Gastrocnemius medialis (tissue), 4 donors: ENCODE measurements at regions of chr9 and their contacts with region 1.

Region 1: DNA sequence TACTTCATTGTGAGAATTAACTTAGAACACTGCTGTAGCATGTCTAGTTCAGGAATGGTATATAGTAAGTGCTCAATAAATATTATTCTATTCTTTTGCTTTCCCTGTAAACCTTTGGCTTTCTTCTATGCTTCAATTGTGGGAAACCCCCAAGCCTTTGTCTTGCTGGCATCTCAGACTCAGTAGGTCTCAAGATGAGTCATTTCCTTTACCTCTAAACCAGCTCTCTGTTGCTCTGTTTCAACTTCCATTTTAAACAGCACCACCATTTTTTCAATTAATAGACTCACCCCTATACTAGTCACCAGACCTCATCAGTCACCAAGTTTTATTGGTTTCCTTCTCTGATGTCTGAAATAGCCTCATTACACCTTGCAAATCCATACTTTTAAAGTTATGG is 43.5 kb downstream of the DMAC1 start:
- DNase-seq: no peak
- ATAC-seq: no peak
- H3K4me3 ChIP-seq: no peak overlapping the region
- H3K27ac ChIP-seq: no peak overlapping the region
- H3K4me1 ChIP-seq: no peaks in the 10 kb centered on the region
- H3K27me3 ChIP-seq: no peaks in the 10 kb centered on the region
- CTCF ChIP-seq: no peak
- POLR2A ChIP-seq: no peak

Region 2: GRCh38 chr9:7691909-7692308 is 64.2 kb before region 1 on chr9:
- in situ Hi-C with region 1: loop called in 1 of 4 experiments (anchors 10 kb)
- intact Hi-C with region 1: no loop called
- DNase-seq: no peak
- ATAC-seq: no peak
- H3K4me3 ChIP-seq: no peak overlapping the region
- H3K27ac ChIP-seq: no peak overlapping the region
- H3K4me1 ChIP-seq: no peaks in the 10 kb centered on the region
- H3K27me3 ChIP-seq: no peaks in the 10 kb centered on the region
- CTCF ChIP-seq: no peak
- POLR2A ChIP-seq: no peak

Region 3: GRCh38 chr9:7811677-7812076 is 55.6 kb after region 1 on chr9:
- in situ Hi-C with region 1: no loop called
- intact Hi-C with region 1: no loop called
- DNase-seq: no peak
- ATAC-seq: no peak
- H3K4me3 ChIP-seq: no peak overlapping the region
- H3K27ac ChIP-seq: no peak overlapping the region
- H3K4me1 ChIP-seq: no peaks in the 10 kb centered on the region
- H3K27me3 ChIP-seq: no peaks in the 10 kb centered on the region
- CTCF ChIP-seq: no peak
- POLR2A ChIP-seq: no peak